ENCODE measurements at regions of chr6 and their contacts with region 1.

Region 1: DNA sequence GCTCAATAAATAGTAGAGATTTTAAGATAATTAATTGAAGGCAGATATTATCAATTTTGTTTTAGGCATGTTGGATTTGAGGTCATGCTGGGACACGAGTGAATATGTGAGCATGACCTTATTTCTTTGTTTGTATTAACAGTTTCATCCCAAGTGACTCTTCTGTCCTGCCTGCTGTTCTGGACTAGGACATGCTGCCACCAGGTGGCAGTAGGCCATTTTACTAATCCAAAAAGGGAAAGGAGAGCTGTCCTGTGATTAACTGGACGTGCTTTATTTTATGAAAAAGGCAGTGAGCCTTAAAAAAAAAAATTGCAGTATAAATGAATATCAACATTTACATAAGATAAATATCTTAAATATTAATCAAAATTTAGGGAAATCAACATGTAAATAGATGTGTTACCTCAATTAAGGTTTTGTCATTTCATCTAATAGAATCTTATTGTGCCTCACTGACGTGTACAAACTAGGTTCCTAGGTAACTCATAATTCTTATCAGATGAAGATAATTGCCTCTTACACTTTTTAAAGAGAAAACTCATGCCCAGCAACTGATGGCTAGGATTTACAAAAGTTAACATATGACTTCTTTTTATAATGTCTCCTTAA is 49.8 kb downstream of the FRK start:
- DNase-seq: peak; percentile 15
- CTCF ChIP-seq: peak; percentile 80

Region 2: GRCh38 chr6:115945306-115945705 is 65.6 kb before region 1 on chr6:
- CTCF ChIA-PET with region 1: no interaction called
- POLR2A ChIA-PET with region 1: no interaction called
- DNase-seq: no peak
- CTCF ChIP-seq: no peak

Region 3: DNA sequence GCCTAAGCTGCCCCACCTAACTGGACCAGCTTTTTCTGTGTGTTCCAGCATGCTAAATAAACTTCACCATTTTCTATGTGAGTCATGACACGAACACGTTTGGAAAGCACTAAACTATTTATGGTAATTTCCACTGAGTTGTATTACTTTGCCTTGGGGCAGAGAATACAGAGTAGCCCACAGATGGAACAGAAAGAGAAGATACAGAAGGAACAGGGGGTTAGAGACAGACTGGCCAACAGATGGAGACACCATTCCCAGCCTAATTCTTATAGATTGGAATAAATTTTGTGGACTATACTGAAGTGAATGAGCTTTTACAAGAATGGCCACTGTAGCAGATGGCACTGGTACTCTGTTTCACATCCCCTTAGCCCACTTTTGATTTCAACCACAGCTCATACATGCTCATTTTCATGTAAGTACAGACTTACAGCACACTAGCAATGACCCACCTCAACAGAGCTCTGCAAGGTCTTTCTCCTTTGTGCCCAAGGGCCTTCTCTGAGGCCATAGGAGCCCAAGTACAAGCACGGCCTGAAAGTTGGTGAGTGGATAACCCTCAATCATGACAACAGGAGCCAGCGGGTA is 76.6 kb after region 1 on chr6:
- CTCF ChIA-PET with region 1: interaction called, 26 read pairs
- POLR2A ChIA-PET with region 1: no interaction called
- DNase-seq: peak; percentile 32
- CTCF ChIP-seq: no peak

Measured in GM10248 (cell line).